HEK293T (cell line): ENCODE measurements at regions of chr11 and their contacts with region 1.

Region 1: GRCh38 chr11:124194698-124195410 is 11.7 kb downstream of the OR10D3 start:
- DNase-seq: peak; percentile 55

Region 2: GRCh38 chr11:124070915-124071635 is 123.8 kb before region 1 on chr11:
- CTCF ChIA-PET with region 1: interaction called, 19 read pairs
- POLR2A ChIA-PET with region 1: no interaction called
- DNase-seq: peak; percentile 60

Region 3: GRCh38 chr11:124183068-124183467 is 11.8 kb before region 1 on chr11 and contains the start of gene OR10D3:
- CTCF ChIA-PET with region 1: no interaction called
- POLR2A ChIA-PET with region 1: no interaction called
- DNase-seq: no peak